Activated naive CD4-positive, alpha-beta T cell treated with anti-CD3 and anti-CD28 coated beads for 36 hours (primary cell): ENCODE measurements at regions of chr12 and their contacts with region 1.

Region 1: DNA sequence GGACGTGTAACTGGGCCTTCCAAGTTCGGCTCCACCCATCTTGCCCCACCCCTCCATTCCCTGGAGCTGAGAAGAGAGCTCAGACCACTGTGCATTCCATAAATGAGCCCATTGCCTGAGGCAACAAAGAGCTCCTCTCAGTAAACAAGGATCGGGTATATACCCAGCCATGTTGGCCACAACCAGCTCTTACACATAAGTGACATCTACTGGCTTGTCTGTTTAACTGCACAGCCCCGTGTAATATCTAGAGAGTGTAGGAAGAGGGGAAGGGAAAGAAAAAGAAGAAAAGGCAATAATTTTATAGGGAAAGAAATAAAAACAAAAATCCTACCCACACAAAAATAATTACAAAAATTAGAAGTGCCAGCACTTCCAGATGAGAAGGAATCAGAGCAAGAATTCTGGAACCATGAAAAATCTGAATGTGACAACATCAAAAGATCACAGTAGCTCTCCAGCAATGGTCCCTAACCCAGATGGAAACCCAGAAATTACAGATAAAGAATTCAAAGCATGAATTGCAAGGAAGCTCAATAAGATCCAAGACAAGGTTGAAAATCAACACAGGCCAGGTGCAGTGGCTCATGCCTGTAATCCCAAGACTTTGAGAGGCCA is 308.1 kb downstream of the RPAP3 start:
- DNase-seq: peak; percentile 72
- H3K4me3 Mint-ChIP-seq: peak overlapping the region; percentile 33
- H3K27ac Mint-ChIP-seq: peak overlapping the region; percentile 100
- H3K4me1 Mint-ChIP-seq: peaks cover 95% of the 10 kb centered on the region
- H3K27me3 Mint-ChIP-seq: no peaks in the 10 kb centered on the region

Region 2: DNA sequence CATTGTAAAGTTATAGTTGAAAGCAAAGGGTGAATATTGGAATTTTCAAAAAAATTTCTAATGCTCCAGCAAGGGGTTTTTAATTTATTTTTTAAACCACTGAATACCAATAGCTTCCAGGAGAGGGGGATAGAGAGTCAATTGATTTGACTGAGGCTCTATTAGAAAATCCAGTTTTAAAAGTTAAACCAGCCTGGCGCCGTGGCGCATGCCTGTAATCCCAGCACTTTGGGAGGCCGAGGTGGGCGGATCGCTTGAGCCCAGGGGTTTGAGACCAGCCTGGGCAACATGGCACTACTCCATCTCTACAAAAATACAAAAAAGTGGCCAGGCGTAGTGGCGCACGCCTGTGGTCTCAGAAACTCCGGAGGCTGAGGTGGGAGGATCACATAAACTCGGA is 722.0 kb before region 1 on chr12:
- CTCF ChIA-PET with region 1: no interaction called
- intact Hi-C with region 1: loop called (anchors 5 kb)
- DNase-seq: no peak
- H3K4me3 Mint-ChIP-seq: no peak overlapping the region
- H3K27ac Mint-ChIP-seq: no peak overlapping the region
- H3K4me1 Mint-ChIP-seq: peaks cover 7% of the 10 kb centered on the region
- H3K27me3 Mint-ChIP-seq: no peaks in the 10 kb centered on the region

Region 3: GRCh38 chr12:47085815-47086252 is 311.9 kb before region 1 on chr12:
- CTCF ChIA-PET with region 1: interaction called, 6 read pairs
- intact Hi-C with region 1: loop called (anchors 1 kb)
- DNase-seq: peak; percentile 63
- H3K4me3 Mint-ChIP-seq: no peak overlapping the region
- H3K27ac Mint-ChIP-seq: peak overlapping the region; percentile 41
- H3K4me1 Mint-ChIP-seq: peaks cover 54% of the 10 kb centered on the region
- H3K27me3 Mint-ChIP-seq: no peaks in the 10 kb centered on the region

Region 4: DNA sequence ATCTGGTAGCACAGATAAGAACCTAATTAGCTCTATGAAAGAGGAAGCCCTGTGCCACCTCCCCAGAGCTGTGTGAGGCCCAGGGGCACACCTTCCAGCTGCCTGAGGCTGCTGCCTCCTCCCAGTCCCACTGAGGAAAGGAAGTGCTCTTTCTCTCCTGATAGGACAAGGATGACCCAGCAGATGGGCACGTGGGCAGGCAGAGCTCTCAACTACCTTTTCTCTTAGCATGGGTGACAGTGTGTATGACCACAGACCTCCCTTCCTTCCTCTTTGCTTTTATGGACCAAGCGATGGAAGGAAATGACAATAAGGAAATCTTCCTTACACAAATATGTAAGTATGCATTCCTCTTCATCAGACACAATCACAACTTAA is 190.4 kb before region 1 on chr12:
- CTCF ChIA-PET with region 1: interaction called, 20 read pairs
- intact Hi-C with region 1: loop called (anchors 2 kb)
- DNase-seq: peak; percentile 81
- H3K4me3 Mint-ChIP-seq: peak overlapping the region; percentile 94
- H3K27ac Mint-ChIP-seq: peak overlapping the region; percentile 100
- H3K4me1 Mint-ChIP-seq: peaks cover 71% of the 10 kb centered on the region
- H3K27me3 Mint-ChIP-seq: no peaks in the 10 kb centered on the region

Region 5: GRCh38 chr12:47302111-47302671 is 95.6 kb before region 1 on chr12:
- CTCF ChIA-PET with region 1: interaction called, 18 read pairs
- intact Hi-C with region 1: loop called (anchors 1 kb)
- DNase-seq: no peak
- H3K4me3 Mint-ChIP-seq: peak overlapping the region; percentile 1
- H3K27ac Mint-ChIP-seq: peak overlapping the region; percentile 93
- H3K4me1 Mint-ChIP-seq: peaks cover 75% of the 10 kb centered on the region
- H3K27me3 Mint-ChIP-seq: no peaks in the 10 kb centered on the region

Region 6: GRCh38 chr12:47361389-47362021 is 36.3 kb before region 1 on chr12:
- CTCF ChIA-PET with region 1: interaction called, 40 read pairs
- intact Hi-C with region 1: loop called (anchors 1 kb)
- DNase-seq: peak; percentile 81
- H3K4me3 Mint-ChIP-seq: peak overlapping the region; percentile 72
- H3K27ac Mint-ChIP-seq: peak overlapping the region; percentile 98
- H3K4me1 Mint-ChIP-seq: peaks cover 58% of the 10 kb centered on the region
- H3K27me3 Mint-ChIP-seq: no peaks in the 10 kb centered on the region

Region 7: DNA sequence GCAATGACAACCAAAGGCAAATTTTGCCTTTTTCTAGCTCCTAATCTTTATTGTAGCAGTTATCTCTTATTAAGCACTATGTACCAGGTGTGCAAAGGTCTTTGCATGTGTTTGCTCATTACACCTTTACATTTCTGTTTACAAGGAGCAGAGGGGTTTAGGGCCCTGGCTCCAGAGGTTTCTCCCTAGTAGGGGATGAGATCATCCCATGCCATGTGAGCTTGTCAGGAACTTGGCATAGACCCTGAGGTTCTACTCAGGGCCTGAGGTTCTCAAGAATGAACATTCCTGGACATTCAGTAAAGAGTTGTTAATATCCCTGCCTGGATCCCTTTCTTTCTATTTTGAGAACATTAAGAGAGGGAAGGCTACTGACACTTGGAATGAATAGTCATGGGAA is 16.0 kb after region 1 on chr12:
- CTCF ChIA-PET with region 1: interaction called, 24 read pairs
- intact Hi-C with region 1: loop called (anchors 1 kb)
- DNase-seq: no peak
- H3K4me3 Mint-ChIP-seq: no peak overlapping the region
- H3K27ac Mint-ChIP-seq: peak overlapping the region; percentile 69
- H3K4me1 Mint-ChIP-seq: peaks cover 83% of the 10 kb centered on the region
- H3K27me3 Mint-ChIP-seq: no peaks in the 10 kb centered on the region